Common myeloid progenitor, CD34-positive (primary cell): ENCODE measurements at regions of chr12 and their contacts with region 1.

Region 1: GRCh38 chr12:48758221-48758620 is 30.7 kb downstream of the ADCY6 start:
- DNase-seq: peak in 2 of 3 donors; percentile 19 to 31
- H3K4me3 ChIP-seq: no peak overlapping the region
- H3K27ac ChIP-seq: no peak overlapping the region
- H3K4me1 ChIP-seq: peaks cover 0 to 3% (median 2%) of the 10 kb centered on the region in 4 experiments
- H3K27me3 ChIP-seq: no peaks in the 10 kb centered on the region

Region 2: GRCh38 chr12:48779869-48780268 is 21.6 kb after region 1 on chr12:
- CTCF ChIA-PET with region 1: interaction called, 21 read pairs
- POLR2A ChIA-PET with region 1: no interaction called
- DNase-seq: peak; percentile 44 to 71 (median 68)
- H3K4me3 ChIP-seq: peak overlapping the region in 4 of 7 experiments; percentile 16 to 46 (median 33)
- H3K27ac ChIP-seq: peak overlapping the region in 1 of 2 experiments; percentile 32
- H3K4me1 ChIP-seq: peaks cover 0 to 28% (median 25%) of the 10 kb centered on the region in 4 experiments
- H3K27me3 ChIP-seq: no peaks in the 10 kb centered on the region

Region 3: GRCh38 chr12:48814262-48815125 is 56.3 kb after region 1 on chr12:
- CTCF ChIA-PET with region 1: interaction called, 12 read pairs
- POLR2A ChIA-PET with region 1: no interaction called
- DNase-seq: peak; percentile 80 to 85 (median 82)
- H3K4me3 ChIP-seq: peak overlapping the region; percentile 72 to 88 (median 79)
- H3K27ac ChIP-seq: peak overlapping the region in 1 of 2 experiments; percentile 58
- H3K4me1 ChIP-seq: peaks cover 0 to 44% (median 36%) of the 10 kb centered on the region in 4 experiments
- H3K27me3 ChIP-seq: peaks cover 0 to 9% (median 0%) of the 10 kb centered on the region in 5 experiments

Region 4: DNA sequence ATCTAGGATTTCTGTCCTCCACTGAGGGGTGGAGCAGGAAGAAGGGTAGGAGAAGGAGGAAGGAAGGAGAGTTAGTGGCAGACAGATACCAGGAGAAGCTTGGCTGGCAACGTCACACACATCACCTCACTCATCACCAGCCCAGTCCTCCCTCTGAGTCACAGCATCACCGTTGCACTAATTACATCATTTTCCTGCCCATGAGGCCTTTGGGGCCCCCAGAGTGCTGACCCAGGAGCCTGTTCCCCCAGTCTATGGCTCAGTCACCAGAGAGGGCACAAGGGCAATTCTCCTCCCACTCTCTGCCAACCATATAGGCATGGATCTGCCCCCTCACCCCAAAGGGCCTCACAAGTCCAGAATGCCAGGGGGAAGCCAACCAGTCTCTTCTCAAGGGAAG is 102.9 kb after region 1 on chr12:
- CTCF ChIA-PET with region 1: no interaction called
- POLR2A ChIA-PET with region 1: no interaction called
- DNase-seq: no peak
- H3K4me3 ChIP-seq: no peak overlapping the region
- H3K27ac ChIP-seq: no peak overlapping the region
- H3K4me1 ChIP-seq: peaks cover 0 to 27% (median 22%) of the 10 kb centered on the region in 4 experiments
- H3K27me3 ChIP-seq: peaks cover 0 to 18% (median 10%) of the 10 kb centered on the region in 5 experiments

Region 5: DNA sequence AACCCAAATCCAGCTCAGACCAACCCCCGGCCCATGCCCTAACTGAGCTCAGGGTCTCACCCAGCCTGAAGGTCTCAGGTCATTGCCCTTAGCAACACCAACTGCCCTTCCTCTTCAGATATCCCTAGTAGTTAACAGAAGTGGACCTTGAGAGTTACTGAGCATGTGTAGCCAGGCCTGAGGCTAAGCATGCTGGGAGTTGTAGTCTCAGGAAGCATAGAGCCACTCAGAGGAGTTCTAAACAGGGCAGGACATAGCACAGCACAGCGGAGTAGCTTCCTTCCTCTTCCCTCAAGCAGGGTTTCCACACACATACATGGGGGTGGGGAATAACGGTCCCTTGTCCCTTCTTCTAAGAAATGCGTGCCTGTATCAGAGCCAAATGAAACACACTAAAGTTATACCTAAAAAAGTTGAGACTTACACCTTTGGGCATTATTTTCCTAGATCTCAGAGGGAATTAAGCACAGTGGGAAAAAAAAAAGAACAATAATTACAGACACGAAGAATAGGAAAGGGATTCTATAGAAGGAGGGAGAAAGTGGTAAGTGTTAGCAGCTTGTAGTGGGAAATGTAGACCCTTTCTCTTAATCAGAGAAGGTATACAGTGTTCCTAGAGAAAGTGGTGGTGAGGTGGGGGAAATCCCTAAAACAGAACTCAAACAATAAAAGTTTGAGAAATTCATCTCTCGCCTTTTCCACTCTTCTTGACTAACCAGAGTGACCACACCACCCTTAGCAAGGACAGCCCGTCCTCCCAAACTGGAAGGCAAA is 297.9 kb after region 1 on chr12:
- CTCF ChIA-PET with region 1: no interaction called
- POLR2A ChIA-PET with region 1: no interaction called
- DNase-seq: peak; percentile 72 to 85 (median 80)
- H3K4me3 ChIP-seq: peak overlapping the region in 6 of 7 experiments; percentile 41 to 98 (median 90)
- H3K27ac ChIP-seq: peak overlapping the region; percentile 25 to 99
- H3K4me1 ChIP-seq: peaks cover 31 to 50% (median 46%) of the 10 kb centered on the region in 4 experiments
- H3K27me3 ChIP-seq: no peaks in the 10 kb centered on the region